ENCODE measurements at regions of chr14 and their contacts with region 1.

Region 1: GRCh38 chr14:76647697-76648298 is 113.5 kb upstream of the VASH1 start:
- DNase-seq: peak; percentile 48
- ATAC-seq: peak; percentile 88
- H3K4me3 ChIP-seq: no peak overlapping the region
- H3K27ac ChIP-seq: no peak overlapping the region
- H3K4me1 ChIP-seq: no peaks in the 10 kb centered on the region
- H3K27me3 ChIP-seq: peaks cover 5% of the 10 kb centered on the region; the same call in 1 of the 2 replicates
- CTCF ChIP-seq: peak; percentile 39 to 91 (median 86); a peak in 5 of 6 replicates
- POLR2A ChIP-seq: no peak
- RAD21 ChIP-seq: peak; percentile 72

Region 2: GRCh38 chr14:75982266-75983018 is 665.4 kb before region 1 on chr14:
- CTCF ChIA-PET with region 1: interaction called, 3 read pairs
- POLR2A ChIA-PET with region 1: no interaction called
- RAD21 ChIA-PET with region 1: no interaction called
- intact Hi-C with region 1: loop called (anchors 5 kb)
- DNase-seq: peak; percentile 51
- ATAC-seq: peak; percentile 76
- H3K4me3 ChIP-seq: peak overlapping the region; percentile 53 to 86
- H3K27ac ChIP-seq: peak overlapping the region; percentile 42; the same call in 1 of the 2 replicates
- H3K4me1 ChIP-seq: peaks cover 12 to 27% of the 10 kb centered on the region in 2 experiments
- H3K27me3 ChIP-seq: no peaks in the 10 kb centered on the region
- CTCF ChIP-seq: peak; percentile 44 to 69 (median 52); a peak in 5 of 6 replicates
- POLR2A ChIP-seq: no peak
- RAD21 ChIP-seq: peak; percentile 83

Region 3: DNA sequence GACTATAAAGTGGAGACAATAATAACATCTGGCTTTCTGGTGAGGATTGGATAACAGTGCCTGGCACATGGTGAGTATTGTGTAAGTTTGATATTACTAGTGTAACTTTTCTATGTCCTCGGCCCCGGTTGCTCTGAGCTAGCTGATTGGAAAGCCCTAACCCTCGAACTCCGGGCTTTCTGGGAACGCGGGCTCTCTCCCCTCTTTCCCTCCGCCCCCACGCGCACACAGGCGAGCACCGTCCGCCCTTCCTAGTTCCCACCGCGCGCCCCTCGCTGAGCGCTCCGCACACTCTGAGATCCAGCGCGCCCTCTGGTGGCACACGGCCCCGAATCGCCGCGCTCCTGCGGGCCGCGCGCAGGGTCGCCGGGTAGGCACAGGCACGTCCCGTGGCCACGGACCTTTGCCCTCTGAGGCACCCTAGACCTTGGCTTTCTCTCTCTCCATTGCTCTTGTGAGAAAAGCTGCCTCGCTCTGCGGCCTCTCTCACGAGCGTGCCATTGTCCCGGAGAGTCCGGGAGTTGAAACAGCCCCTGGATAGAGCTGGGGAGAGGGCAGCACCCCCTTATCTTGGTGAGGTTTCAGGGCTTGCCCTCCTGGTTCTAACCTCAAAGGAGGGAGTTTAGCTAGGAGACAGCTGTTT is 295.0 kb before region 1 on chr14:
- CTCF ChIA-PET with region 1: no interaction called
- POLR2A ChIA-PET with region 1: no interaction called
- RAD21 ChIA-PET with region 1: no interaction called
- intact Hi-C with region 1: loop called (anchors 1 kb)
- DNase-seq: no peak
- ATAC-seq: peak; percentile 81
- H3K4me3 ChIP-seq: no peak overlapping the region
- H3K27ac ChIP-seq: no peak overlapping the region
- H3K4me1 ChIP-seq: peaks cover 11 to 39% of the 10 kb centered on the region in 2 experiments
- H3K27me3 ChIP-seq: peaks cover 9% of the 10 kb centered on the region; the same call in 1 of the 2 replicates
- CTCF ChIP-seq: peak; percentile 62 to 82 (median 79); a peak in 5 of 6 replicates
- POLR2A ChIP-seq: no peak
- RAD21 ChIP-seq: peak; percentile 81

Region 4: GRCh38 chr14:76456200-76456599 is 191.6 kb before region 1 on chr14:
- CTCF ChIA-PET with region 1: no interaction called
- POLR2A ChIA-PET with region 1: no interaction called
- RAD21 ChIA-PET with region 1: no interaction called
- intact Hi-C with region 1: loop called (anchors 1 kb)
- DNase-seq: peak; percentile 28
- ATAC-seq: peak; percentile 93
- H3K4me3 ChIP-seq: no peak overlapping the region
- H3K27ac ChIP-seq: no peak overlapping the region
- H3K4me1 ChIP-seq: no peaks in the 10 kb centered on the region
- H3K27me3 ChIP-seq: no peaks in the 10 kb centered on the region
- CTCF ChIP-seq: peak; percentile 32 to 75 (median 63); a peak in 5 of 6 replicates
- POLR2A ChIP-seq: no peak
- RAD21 ChIP-seq: peak; percentile 40; the same call in 1 of the 2 replicates

Region 5: DNA sequence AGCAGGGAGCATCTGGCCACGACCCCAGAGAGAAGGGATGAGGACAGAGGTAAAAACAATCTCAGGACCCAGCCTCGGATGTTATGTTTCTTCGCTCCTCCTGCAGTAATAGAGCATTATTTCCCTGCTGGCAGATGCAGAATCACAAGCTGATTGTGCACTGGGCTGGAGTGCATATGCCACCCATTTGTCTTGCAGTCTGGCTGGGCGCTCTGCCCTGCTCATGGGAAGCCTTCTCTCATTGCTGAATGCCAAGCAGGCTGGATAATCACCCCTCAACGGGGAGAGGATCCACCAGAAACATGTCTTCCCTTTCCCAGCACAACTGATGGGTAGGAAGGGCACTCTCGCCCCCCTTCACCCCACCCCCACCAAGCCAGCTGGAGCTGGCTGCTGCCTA is 104.9 kb after region 1 on chr14:
- CTCF ChIA-PET with region 1: no interaction called
- POLR2A ChIA-PET with region 1: no interaction called
- RAD21 ChIA-PET with region 1: no interaction called
- intact Hi-C with region 1: no loop called
- DNase-seq: no peak
- ATAC-seq: no peak
- H3K4me3 ChIP-seq: no peak overlapping the region
- H3K27ac ChIP-seq: no peak overlapping the region
- H3K4me1 ChIP-seq: no peaks in the 10 kb centered on the region
- H3K27me3 ChIP-seq: 0 out of 2 replicates have a peak, but pooled peaks cover 7% of the 10 kb centered on the region
- CTCF ChIP-seq: no peak
- POLR2A ChIP-seq: no peak
- RAD21 ChIP-seq: no peak

Region 6: DNA sequence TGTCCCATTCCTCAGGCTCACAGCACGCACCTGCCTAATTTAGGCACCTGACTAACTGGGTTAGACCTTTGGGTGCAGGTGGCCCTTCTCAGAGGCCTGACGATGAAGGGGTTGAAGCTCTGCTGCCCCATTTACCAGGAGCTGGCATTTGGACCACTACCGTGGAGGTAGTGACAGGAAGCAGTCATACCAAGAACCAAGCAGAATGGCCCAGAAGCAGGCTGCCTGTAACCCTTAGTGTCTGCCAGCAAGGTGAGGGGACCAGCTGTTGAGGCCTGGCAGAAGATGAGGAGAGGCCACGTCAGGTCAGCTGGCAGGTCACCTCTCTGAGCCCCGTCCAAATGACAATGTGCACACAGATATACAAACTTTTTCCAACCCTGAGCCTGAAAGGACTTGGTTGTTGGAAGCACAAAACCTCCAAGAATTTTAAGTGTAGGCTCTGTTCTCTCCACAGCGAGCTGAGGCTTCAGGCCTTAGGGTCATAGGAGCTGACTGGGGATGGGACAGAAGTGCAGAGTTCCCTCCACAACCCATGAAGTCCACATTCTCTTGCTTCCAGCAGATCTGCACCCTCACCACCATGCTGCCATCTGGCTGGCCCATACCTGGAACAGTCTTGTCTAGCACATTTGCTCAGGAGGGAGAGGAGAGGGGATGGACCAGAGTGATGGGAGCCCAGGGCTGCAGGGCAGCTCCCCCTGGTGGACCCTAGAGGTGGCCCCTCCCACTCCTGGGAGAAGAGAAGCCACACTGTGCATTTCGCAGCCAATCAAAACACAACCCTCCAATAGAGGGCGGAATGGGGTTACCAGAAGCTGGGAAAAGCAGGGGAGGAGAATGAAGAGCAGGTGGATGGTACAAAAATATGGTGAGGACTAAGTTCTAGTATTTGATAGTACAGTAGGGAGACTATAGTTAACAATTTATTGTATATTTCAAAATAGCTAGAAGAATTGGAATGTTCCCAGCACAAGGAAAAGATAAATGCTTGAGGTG is 136.8 kb after region 1 on chr14:
- CTCF ChIA-PET with region 1: no interaction called
- POLR2A ChIA-PET with region 1: no interaction called
- RAD21 ChIA-PET with region 1: no interaction called
- intact Hi-C with region 1: no loop called
- DNase-seq: peak; percentile 60
- ATAC-seq: peak; percentile 100
- H3K4me3 ChIP-seq: no peak overlapping the region
- H3K27ac ChIP-seq: no peak overlapping the region
- H3K4me1 ChIP-seq: no peaks in the 10 kb centered on the region
- H3K27me3 ChIP-seq: no peaks in the 10 kb centered on the region
- CTCF ChIP-seq: peak; percentile 97 to 99 (median 98)
- POLR2A ChIP-seq: no peak
- RAD21 ChIP-seq: peak; percentile 80